Transverse colon (tissue), 4 donors: ENCODE measurements at regions of chr12 and their contacts with region 1.

Region 1: GRCh38 chr12:107225635-107226034 is 132.3 kb upstream of the CRY1 start:
- DNase-seq: no peak
- H3K4me3 ChIP-seq: no peak overlapping the region
- H3K27ac ChIP-seq: no peak overlapping the region
- H3K4me1 ChIP-seq: no peaks in the 10 kb centered on the region
- H3K27me3 ChIP-seq: peaks cover under 1% of the 10 kb centered on the region
- CTCF ChIP-seq: no peak
- EP300 ChIP-seq: no peak
- POLR2A ChIP-seq: no peak

Region 2: DNA sequence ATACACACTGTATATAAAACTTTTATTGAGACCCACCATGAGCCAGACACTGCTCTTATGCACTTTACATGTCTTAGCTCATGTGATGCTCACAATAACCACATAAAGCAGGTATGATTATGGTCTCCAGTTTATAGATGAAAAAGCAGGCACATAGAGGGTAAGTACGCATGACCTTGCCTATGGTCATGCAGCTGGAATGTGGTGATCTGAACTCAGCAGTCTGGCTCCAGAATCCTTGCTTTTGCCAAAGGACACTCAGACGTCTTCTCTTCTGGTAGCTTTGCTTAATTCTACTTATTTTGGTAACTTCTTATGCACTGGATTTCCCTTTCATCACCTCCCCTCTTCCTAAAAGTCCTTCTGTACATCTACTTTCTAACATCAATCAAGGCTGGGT is 29.0 kb before region 1 on chr12:
- in situ Hi-C with region 1: no loop called
- intact Hi-C with region 1: loop called (anchors 1 kb)
- DNase-seq: no peak
- H3K4me3 ChIP-seq: no peak overlapping the region
- H3K27ac ChIP-seq: no peak overlapping the region
- H3K4me1 ChIP-seq: no peaks in the 10 kb centered on the region
- H3K27me3 ChIP-seq: no peaks in the 10 kb centered on the region
- CTCF ChIP-seq: no peak
- EP300 ChIP-seq: no peak
- POLR2A ChIP-seq: no peak

Region 3: DNA sequence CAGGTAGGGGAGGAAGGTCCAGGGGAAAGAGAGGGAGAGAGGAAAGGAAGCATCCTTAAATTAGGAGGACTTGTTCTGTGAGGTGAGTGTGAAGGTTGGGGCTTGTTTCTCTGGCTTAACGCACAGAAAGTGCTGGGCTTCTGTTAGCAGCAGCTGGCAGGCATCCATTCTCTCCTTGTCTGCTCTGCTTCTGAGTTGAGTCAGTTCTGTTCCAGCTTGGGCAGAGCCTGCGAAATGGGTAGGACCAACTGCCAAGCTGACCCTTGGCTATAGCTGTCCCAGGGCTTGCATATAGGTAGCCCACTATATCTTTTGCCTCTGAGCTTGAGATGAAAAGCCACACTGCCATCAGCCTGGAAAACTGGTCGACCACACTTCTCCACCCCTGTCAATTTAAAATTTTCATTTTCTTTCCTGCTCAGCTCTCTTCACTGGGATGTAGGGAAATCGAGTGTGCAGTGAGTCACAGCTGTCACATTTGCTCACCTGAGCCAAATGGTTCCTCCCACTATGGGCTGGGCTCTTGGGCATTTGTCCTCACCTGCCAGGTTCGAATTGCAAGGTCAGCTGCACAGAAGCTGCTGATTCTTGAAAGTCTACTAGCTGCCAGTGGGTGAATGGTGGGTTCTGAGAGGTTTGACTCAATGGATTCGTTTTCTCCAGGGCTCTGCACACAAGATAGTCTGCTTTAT is 203.5 kb after region 1 on chr12:
- in situ Hi-C with region 1: no loop called
- intact Hi-C with region 1: no loop called
- DNase-seq: peak; percentile 27
- H3K4me3 ChIP-seq: no peak overlapping the region
- H3K27ac ChIP-seq: no peak overlapping the region
- H3K4me1 ChIP-seq: no peaks in the 10 kb centered on the region
- H3K27me3 ChIP-seq: no peaks in the 10 kb centered on the region
- CTCF ChIP-seq: no peak
- EP300 ChIP-seq: no peak
- POLR2A ChIP-seq: no peak